B cell (primary cell): ENCODE measurements at regions of chr6 and their contacts with region 1.

Region 1: GRCh38 chr6:33607784-33608161 is 13.3 kb upstream of the ITPR3 start:
- DNase-seq: peak; percentile 70
- ATAC-seq: peak; percentile 87
- H3K4me3 ChIP-seq: no peak overlapping the region
- H3K4me3 Mint-ChIP-seq: no peak overlapping the region
- H3K27ac ChIP-seq: no peak overlapping the region
- H3K27ac Mint-ChIP-seq: no peak overlapping the region
- H3K4me1 ChIP-seq: peaks cover 7 to 23% of the 10 kb centered on the region in 2 donors
- H3K4me1 Mint-ChIP-seq: peaks cover 30% of the 10 kb centered on the region
- H3K27me3 ChIP-seq: no peaks in the 10 kb centered on the region
- H3K27me3 Mint-ChIP-seq: no peaks in the 10 kb centered on the region
- CTCF ChIP-seq: peak; percentile 74

Region 2: GRCh38 chr6:33248925-33249731 is 358.6 kb before region 1 on chr6:
- CTCF ChIA-PET with region 1: no interaction called
- POLR2A ChIA-PET with region 1: no interaction called
- intact Hi-C with region 1: no loop called
- DNase-seq: peak; percentile 99
- ATAC-seq: peak; percentile 85
- H3K4me3 ChIP-seq: peak overlapping the region; percentile 63 to 84 (median 75)
- H3K4me3 Mint-ChIP-seq: peak overlapping the region; percentile 97
- H3K27ac ChIP-seq: peak overlapping the region; percentile 75 to 88
- H3K27ac Mint-ChIP-seq: peak overlapping the region; percentile 97
- H3K4me1 ChIP-seq: peaks cover 12 to 24% of the 10 kb centered on the region in 2 donors
- H3K4me1 Mint-ChIP-seq: peaks cover 31% of the 10 kb centered on the region
- H3K27me3 ChIP-seq: peaks cover 0 to 4% (median 0%) of the 10 kb centered on the region in 4 experiments
- H3K27me3 Mint-ChIP-seq: peaks cover 4% of the 10 kb centered on the region
- CTCF ChIP-seq: no peak

Region 3: DNA sequence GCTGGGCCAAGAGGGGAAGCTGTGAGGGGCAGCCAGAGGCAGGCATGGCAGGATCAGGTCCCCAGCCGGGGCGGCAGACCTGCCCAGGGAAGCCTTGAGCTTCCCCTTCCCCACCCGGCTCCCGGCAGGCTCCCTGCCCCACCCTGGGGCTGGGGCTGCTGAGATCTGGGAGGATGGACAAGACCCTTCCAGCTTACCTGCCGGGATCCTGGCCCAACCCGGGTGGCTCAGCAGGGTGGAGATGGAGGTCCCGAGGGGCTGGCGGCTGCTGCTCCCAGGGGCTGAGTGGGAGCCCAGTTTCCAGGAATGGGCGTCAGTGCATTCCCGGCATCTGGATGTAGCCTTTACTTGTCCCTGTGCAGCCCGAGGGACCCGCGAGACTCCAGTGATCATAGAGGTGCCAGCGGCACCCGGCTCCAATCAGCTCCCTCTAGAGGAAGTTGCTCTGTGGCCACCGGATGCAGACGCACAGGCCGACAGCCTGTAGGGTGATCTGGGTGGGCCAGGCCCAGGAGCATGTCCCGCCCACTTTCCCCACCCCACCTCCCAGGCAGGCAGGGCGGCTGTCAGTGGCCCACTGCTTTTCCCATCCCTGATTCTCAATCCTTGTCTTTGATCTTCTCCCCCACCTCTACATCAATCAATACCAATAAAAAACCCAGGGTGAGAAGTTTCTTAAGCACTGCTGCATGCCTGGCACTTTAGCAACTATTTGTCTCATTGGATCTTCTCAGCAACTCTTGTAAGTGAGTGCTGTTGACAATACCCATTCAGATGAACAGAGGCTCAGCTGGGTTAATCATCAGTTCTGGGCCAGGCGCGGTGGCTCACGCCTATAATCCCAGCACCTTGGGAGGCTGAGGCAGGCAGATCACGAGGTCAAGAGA is 27.7 kb before region 1 on chr6 and contains the start of gene BAK1:
- CTCF ChIA-PET with region 1: interaction called, 330 read pairs
- POLR2A ChIA-PET with region 1: no interaction called
- intact Hi-C with region 1: loop called (anchors 1 kb)
- DNase-seq: peak; percentile 89
- ATAC-seq: peak; percentile 98
- H3K4me3 ChIP-seq: peak within 1 kb of the TSS; percentile 65 to 87 (median 71)
- H3K4me3 Mint-ChIP-seq: peak within 1 kb of the TSS; percentile 95
- H3K27ac ChIP-seq: peak within 1 kb of the TSS; percentile 73 to 89
- H3K27ac Mint-ChIP-seq: peak within 1 kb of the TSS; percentile 95
- H3K4me1 ChIP-seq: peaks cover 23 to 39% of the 10 kb centered on the region in 2 donors
- H3K4me1 Mint-ChIP-seq: peaks cover 35% of the 10 kb centered on the region
- H3K27me3 ChIP-seq: no peaks in the 10 kb centered on the region
- H3K27me3 Mint-ChIP-seq: no peaks in the 10 kb centered on the region
- CTCF ChIP-seq: peak; percentile 56
- total RNA-seq, gene BAK1: 22.6 and 23.3 TPM in 2 replicates

Region 4: GRCh38 chr6:33592411-33593054 is 15.2 kb before region 1 on chr6:
- CTCF ChIA-PET with region 1: interaction called, 330 read pairs
- POLR2A ChIA-PET with region 1: interaction called, 18 read pairs
- intact Hi-C with region 1: loop called (anchors 1 kb)
- DNase-seq: peak; percentile 91
- ATAC-seq: peak; percentile 50
- H3K4me3 ChIP-seq: peak overlapping the region in 4 of 5 experiments; percentile 38 to 67 (median 42)
- H3K4me3 Mint-ChIP-seq: peak overlapping the region; percentile 81
- H3K27ac ChIP-seq: peak overlapping the region; percentile 94 to 100
- H3K27ac Mint-ChIP-seq: peak overlapping the region; percentile 100
- H3K4me1 ChIP-seq: peaks cover 50 to 61% of the 10 kb centered on the region in 2 donors
- H3K4me1 Mint-ChIP-seq: peaks cover 68% of the 10 kb centered on the region
- H3K27me3 ChIP-seq: no peaks in the 10 kb centered on the region
- H3K27me3 Mint-ChIP-seq: no peaks in the 10 kb centered on the region
- CTCF ChIP-seq: no peak